Sigmoid colon (tissue), 7 donors: ENCODE measurements at regions of chr12 and their contacts with region 1.

Region 1: DNA sequence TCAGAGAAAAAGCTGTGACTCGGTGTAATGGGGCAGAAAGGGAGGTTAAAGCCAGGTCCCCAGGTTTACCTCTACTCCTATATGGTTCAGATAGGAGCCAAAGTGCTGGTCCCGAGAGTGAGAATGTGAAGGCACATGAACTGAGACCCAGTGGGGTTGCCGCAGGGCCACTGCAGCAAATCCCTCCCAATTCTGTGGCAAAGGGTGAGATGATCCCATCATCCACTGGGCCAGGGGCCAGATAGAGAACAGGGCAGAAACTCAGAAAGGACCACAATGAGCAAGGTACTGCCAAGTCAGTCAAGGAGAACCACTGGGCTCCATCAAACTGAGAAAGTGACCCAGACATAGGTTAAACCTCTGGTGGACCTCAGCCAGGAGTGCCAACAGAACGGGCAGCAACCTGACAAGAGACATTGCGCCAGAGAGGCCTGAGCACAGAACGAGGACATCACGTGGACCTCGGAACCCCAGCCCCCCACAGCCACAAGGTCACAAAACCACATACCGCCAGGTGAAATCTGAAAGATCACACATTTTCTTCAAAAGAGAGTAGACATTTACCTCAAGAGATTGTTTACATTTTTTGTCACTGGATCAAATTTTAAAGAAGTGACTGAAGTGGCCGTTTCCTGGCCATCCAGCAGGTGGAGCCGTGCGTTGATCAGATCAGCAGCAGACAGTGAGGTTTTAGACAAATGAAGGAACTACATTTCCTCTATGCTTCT is 20.5 kb upstream of the ITPR2 start:
- DNase-seq: peak; percentile 76
- H3K4me3 ChIP-seq: no peak overlapping the region
- H3K27ac ChIP-seq: no peak overlapping the region
- H3K4me1 ChIP-seq: peaks cover 0 to 6% (median 0%) of the 10 kb centered on the region in 4 donors
- H3K27me3 ChIP-seq: no peaks in the 10 kb centered on the region
- CTCF ChIP-seq: peak; percentile 81 to 88 (median 83)
- EP300 ChIP-seq: no peak
- POLR2A ChIP-seq: no peak

Region 2: GRCh38 chr12:26884765-26885576 is 31.5 kb after region 1 on chr12:
- intact Hi-C with region 1: loop called (anchors 1 kb)
- DNase-seq: peak; percentile 90
- H3K4me3 ChIP-seq: no peak overlapping the region
- H3K27ac ChIP-seq: no peak overlapping the region
- H3K4me1 ChIP-seq: peaks cover 0 to 6% (median 3%) of the 10 kb centered on the region in 4 donors
- H3K27me3 ChIP-seq: no peaks in the 10 kb centered on the region
- CTCF ChIP-seq: peak; percentile 90 to 96 (median 94)
- EP300 ChIP-seq: no peak
- POLR2A ChIP-seq: no peak

Region 3: DNA sequence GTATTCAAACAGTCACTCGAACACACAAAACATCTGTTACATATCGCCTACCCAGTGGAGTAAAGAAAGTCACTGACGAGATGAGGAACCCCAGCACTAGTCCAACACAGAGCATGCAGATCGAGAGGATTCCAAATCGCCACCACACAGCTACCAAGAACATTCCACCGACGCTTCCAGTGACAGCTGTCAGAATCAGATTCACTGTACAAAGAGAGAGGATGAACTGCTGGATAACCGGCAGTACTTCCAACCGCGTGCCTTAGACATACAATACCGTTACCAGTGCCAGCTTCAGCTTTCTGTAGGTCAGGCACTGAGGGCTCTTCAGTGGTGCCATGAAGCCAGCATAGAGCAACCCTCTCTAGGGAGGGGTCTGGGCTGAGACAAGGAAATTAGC is 126.3 kb after region 1 on chr12:
- intact Hi-C with region 1: no loop called
- DNase-seq: no peak
- H3K4me3 ChIP-seq: no peak overlapping the region
- H3K27ac ChIP-seq: no peak overlapping the region
- H3K4me1 ChIP-seq: no peaks in the 10 kb centered on the region
- H3K27me3 ChIP-seq: no peaks in the 10 kb centered on the region
- CTCF ChIP-seq: no peak
- EP300 ChIP-seq: no peak
- POLR2A ChIP-seq: no peak

Region 4: GRCh38 chr12:27014085-27014858 is 160.8 kb after region 1 on chr12 and contains the start of gene TM7SF3:
- intact Hi-C with region 1: loop called (anchors 10 kb)
- DNase-seq: peak; percentile 95
- H3K4me3 ChIP-seq: peak within 1 kb of the TSS; percentile 69 to 95 (median 84)
- H3K27ac ChIP-seq: peak within 1 kb of the TSS; percentile 81 to 95 (median 92)
- H3K4me1 ChIP-seq: peaks cover 0 to 40% (median 30%) of the 10 kb centered on the region in 4 donors
- H3K27me3 ChIP-seq: no peaks in the 10 kb centered on the region
- CTCF ChIP-seq: peak; percentile 75 to 91 (median 80)
- EP300 ChIP-seq: no peak
- POLR2A ChIP-seq: no peak
- total RNA-seq, gene TM7SF3: 38.4 to 56.9 (median 51.2) TPM

Region 5: DNA sequence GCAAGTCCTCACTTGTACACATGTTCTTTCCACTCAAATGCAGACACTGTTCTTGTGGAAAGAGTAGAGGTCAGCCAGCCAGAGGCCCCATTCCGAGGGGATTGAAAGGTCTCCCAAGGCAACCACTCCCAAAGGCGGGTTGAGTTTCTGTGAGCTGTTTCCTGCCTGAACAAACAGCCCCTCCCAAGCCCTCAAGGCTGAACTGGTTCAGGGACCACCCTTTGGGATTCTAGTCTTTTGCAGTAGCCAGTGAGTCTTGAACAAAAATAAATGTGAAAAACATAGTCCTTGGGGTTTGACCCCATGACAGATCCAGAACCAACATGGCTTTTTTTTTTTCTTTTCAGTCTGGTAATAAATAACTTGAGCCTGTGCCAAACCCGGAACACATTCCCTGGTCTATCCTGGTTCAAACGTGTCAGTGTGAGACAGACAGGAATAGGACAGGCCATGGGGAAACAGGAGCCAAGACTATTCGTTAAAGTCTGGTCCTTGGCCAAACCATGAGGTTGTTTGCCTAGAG is 373.0 kb after region 1 on chr12:
- intact Hi-C with region 1: no loop called
- DNase-seq: no peak
- H3K4me3 ChIP-seq: no peak overlapping the region
- H3K27ac ChIP-seq: peak overlapping the region in 1 of 4 donors; percentile 20
- H3K4me1 ChIP-seq: no peaks in the 10 kb centered on the region
- H3K27me3 ChIP-seq: no peaks in the 10 kb centered on the region
- CTCF ChIP-seq: no peak
- EP300 ChIP-seq: no peak
- POLR2A ChIP-seq: no peak

Region 6: DNA sequence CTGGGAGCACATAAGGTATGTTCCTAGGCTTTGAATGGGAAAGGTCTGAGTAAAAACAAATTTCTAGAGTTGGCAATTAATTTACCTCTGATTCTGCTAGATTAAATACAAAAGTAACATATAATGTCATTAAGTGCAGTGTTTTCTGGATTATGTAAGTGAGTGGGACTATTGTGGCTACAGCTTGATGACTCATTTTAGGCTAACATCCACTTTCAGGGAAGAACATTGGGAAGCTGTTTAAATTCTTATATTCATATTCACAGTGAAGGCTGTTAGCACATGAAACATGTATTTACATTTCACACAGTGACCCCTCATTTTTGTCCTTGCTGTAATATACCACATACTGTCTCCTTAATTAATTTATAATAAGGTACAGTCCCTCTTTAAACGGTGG is 465.9 kb after region 1 on chr12:
- intact Hi-C with region 1: loop called (anchors 10 kb)
- DNase-seq: no peak
- H3K4me3 ChIP-seq: no peak overlapping the region
- H3K27ac ChIP-seq: peak overlapping the region in 3 of 4 donors; percentile 33 to 52 (median 50)
- H3K4me1 ChIP-seq: peaks cover 0 to 14% (median 5%) of the 10 kb centered on the region in 4 donors
- H3K27me3 ChIP-seq: no peaks in the 10 kb centered on the region
- CTCF ChIP-seq: no peak
- EP300 ChIP-seq: no peak
- POLR2A ChIP-seq: no peak